ENCODE measurements at regions of chr5 and their contacts with region 1.

Region 1: GRCh38 chr5:80204808-80205614 is 50.8 kb downstream of the SERINC5 start:
- DNase-seq: peak; percentile 54 to 83 (median 62)
- ATAC-seq: peak; percentile 98
- H3K4me3 ChIP-seq: no peak overlapping the region
- H3K27ac ChIP-seq: peak overlapping the region; percentile 1; the same call in 1 of the 3 replicates
- H3K4me1 ChIP-seq: peaks cover 5 to 15% of the 10 kb centered on the region in 2 experiments; a peak in 3 of 5 replicates
- H3K27me3 ChIP-seq: no peaks in the 10 kb centered on the region; a peak in 1 of 5 replicates
- CTCF ChIP-seq: peak; percentile 49 to 53 (median 51)
- EP300 ChIP-seq: peak; percentile 95
- POLR2A ChIP-seq: no peak
- RAD21 ChIP-seq: peak; percentile 54 to 66

Region 2: GRCh38 chr5:79811081-79811480 is 393.9 kb before region 1 on chr5:
- CTCF ChIA-PET with region 1: no interaction called
- POLR2A ChIA-PET with region 1: no interaction called
- in situ Hi-C with region 1: no loop called
- intact Hi-C with region 1: no loop called
- DNase-seq: peak; percentile 61 to 91 (median 78)
- ATAC-seq: peak; percentile 95
- H3K4me3 ChIP-seq: no peak overlapping the region
- H3K27ac ChIP-seq: peak overlapping the region; percentile 62
- H3K4me1 ChIP-seq: peaks cover 13 to 42% of the 10 kb centered on the region in 2 experiments
- H3K27me3 ChIP-seq: no peaks in the 10 kb centered on the region
- CTCF ChIP-seq: no peak
- EP300 ChIP-seq: peak; percentile 76; the same call in 1 of the 2 replicates
- POLR2A ChIP-seq: no peak
- RAD21 ChIP-seq: no peak

Region 3: GRCh38 chr5:80191991-80192398 is 13.0 kb before region 1 on chr5:
- CTCF ChIA-PET with region 1: no interaction called
- POLR2A ChIA-PET with region 1: interaction called, 21 read pairs
- in situ Hi-C with region 1: no loop called
- intact Hi-C with region 1: no loop called
- DNase-seq: peak in 3 of 4 experiments; percentile 11 to 79 (median 52)
- ATAC-seq: peak; percentile 91
- H3K4me3 ChIP-seq: no peak overlapping the region
- H3K27ac ChIP-seq: peak overlapping the region; percentile 43
- H3K4me1 ChIP-seq: peaks cover 5 to 33% of the 10 kb centered on the region in 2 experiments; a peak in 4 of 5 replicates
- H3K27me3 ChIP-seq: no peaks in the 10 kb centered on the region
- CTCF ChIP-seq: no peak
- EP300 ChIP-seq: peak; percentile 45; the same call in 1 of the 2 replicates
- POLR2A ChIP-seq: no peak
- RAD21 ChIP-seq: no peak

Region 4: GRCh38 chr5:80216753-80217596 is 12.0 kb after region 1 on chr5:
- CTCF ChIA-PET with region 1: no interaction called
- POLR2A ChIA-PET with region 1: interaction called, 13 read pairs
- in situ Hi-C with region 1: no loop called
- intact Hi-C with region 1: no loop called
- DNase-seq: no peak
- ATAC-seq: no peak
- H3K4me3 ChIP-seq: no peak overlapping the region
- H3K27ac ChIP-seq: no peak overlapping the region
- H3K4me1 ChIP-seq: no peaks in the 10 kb centered on the region; a peak in 2 of 5 replicates
- H3K27me3 ChIP-seq: no peaks in the 10 kb centered on the region
- CTCF ChIP-seq: no peak
- EP300 ChIP-seq: no peak
- POLR2A ChIP-seq: no peak
- RAD21 ChIP-seq: no peak